Activated CD4-positive, alpha-beta memory T cell treated with anti-CD3 and anti-CD28 coated beads for 36 hours (primary cell): ENCODE measurements at regions of chr20 and their contacts with region 1.

Region 1: GRCh38 chr20:51531141-51531710 is 11.3 kb downstream of the NFATC2 start:
- DNase-seq: peak; percentile 91
- H3K4me3 Mint-ChIP-seq: peak overlapping the region; percentile 84
- H3K27ac Mint-ChIP-seq: peak overlapping the region; percentile 94
- H3K4me1 Mint-ChIP-seq: peaks cover 94% of the 10 kb centered on the region
- H3K27me3 Mint-ChIP-seq: no peaks in the 10 kb centered on the region

Region 2: GRCh38 chr20:51404298-51405060 is 126.7 kb before region 1 on chr20:
- CTCF ChIA-PET with region 1: interaction called, 6 read pairs
- POLR2A ChIA-PET with region 1: interaction called, 27 read pairs
- intact Hi-C with region 1: loop called (anchors 1 kb)
- DNase-seq: peak; percentile 97
- H3K4me3 Mint-ChIP-seq: peak overlapping the region; percentile 17
- H3K27ac Mint-ChIP-seq: peak overlapping the region; percentile 99
- H3K4me1 Mint-ChIP-seq: peaks cover 93% of the 10 kb centered on the region
- H3K27me3 Mint-ChIP-seq: no peaks in the 10 kb centered on the region

Region 3: GRCh38 chr20:51469578-51470498 is 61.4 kb before region 1 on chr20:
- CTCF ChIA-PET with region 1: no interaction called
- POLR2A ChIA-PET with region 1: interaction called, 7 read pairs
- intact Hi-C with region 1: loop called (anchors 2 kb)
- DNase-seq: no peak
- H3K4me3 Mint-ChIP-seq: no peak overlapping the region
- H3K27ac Mint-ChIP-seq: peak overlapping the region; percentile 89
- H3K4me1 Mint-ChIP-seq: peaks cover 53% of the 10 kb centered on the region
- H3K27me3 Mint-ChIP-seq: no peaks in the 10 kb centered on the region

Region 4: DNA sequence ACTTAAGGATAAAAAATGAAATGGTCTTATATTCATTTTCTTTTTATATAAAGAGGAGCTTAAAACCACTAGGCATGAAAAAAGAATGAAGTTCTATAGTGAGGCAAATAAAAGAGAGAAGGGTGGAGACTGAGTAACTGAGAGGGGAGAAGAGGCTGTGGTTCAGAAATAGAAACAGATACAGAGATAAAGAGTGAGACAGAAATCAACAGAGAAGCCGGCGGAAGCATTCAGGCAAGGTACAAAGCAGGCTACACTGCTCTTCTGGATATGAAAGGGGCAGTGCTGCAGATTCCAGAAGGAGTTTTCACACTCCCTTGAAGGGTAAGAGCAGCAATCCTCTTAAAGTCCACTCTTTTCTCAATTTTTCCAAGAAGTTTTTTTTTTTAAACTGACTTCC is 18.6 kb before region 1 on chr20:
- CTCF ChIA-PET with region 1: interaction called, 5 read pairs
- POLR2A ChIA-PET with region 1: interaction called, 8 read pairs
- intact Hi-C with region 1: loop called (anchors 1 kb)
- DNase-seq: peak; percentile 47
- H3K4me3 Mint-ChIP-seq: no peak overlapping the region
- H3K27ac Mint-ChIP-seq: peak overlapping the region; percentile 44
- H3K4me1 Mint-ChIP-seq: peaks cover 79% of the 10 kb centered on the region
- H3K27me3 Mint-ChIP-seq: no peaks in the 10 kb centered on the region

Region 5: DNA sequence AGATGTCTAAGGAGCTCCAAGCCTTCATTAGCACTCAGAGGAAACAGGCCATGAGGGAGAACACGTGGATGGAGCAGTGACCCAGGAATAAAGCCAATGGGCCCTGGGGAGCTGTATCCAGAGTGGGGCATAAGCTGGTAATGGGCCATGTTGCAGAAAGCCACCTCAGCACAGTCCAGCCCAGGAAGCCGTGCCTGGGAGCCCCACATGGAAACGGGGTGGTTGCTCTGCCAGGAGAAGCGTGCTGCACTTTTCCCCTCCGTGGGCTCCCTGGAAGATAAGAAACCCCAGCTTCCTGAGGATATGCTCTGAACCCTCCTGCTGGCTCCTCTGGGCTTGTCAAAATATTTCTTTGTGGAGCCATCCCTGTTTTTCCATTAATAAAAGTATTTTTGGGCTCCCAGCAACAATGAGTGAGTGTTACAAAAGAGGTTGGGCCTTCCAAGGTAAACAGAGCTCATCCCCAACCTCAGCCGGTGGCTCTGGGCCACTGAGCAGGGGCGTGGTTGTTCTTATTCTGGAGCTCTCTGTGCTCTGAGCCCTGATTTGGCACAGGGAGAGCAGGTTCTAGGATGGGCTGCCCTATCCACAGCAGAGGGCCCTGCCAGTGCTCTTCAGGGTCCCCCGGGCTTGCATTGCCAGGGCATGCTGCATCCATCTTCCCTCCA is 42.5 kb after region 1 on chr20:
- CTCF ChIA-PET with region 1: no interaction called
- POLR2A ChIA-PET with region 1: no interaction called
- intact Hi-C with region 1: loop called (anchors 1 kb)
- DNase-seq: no peak
- H3K4me3 Mint-ChIP-seq: no peak overlapping the region
- H3K27ac Mint-ChIP-seq: peak overlapping the region; percentile 40
- H3K4me1 Mint-ChIP-seq: peaks cover 20% of the 10 kb centered on the region
- H3K27me3 Mint-ChIP-seq: peaks cover 8% of the 10 kb centered on the region

Region 6: GRCh38 chr20:51631011-51631950 is 100.1 kb after region 1 on chr20:
- CTCF ChIA-PET with region 1: no interaction called
- POLR2A ChIA-PET with region 1: no interaction called
- intact Hi-C with region 1: loop called (anchors 2 kb)
- DNase-seq: peak; percentile 68
- H3K4me3 Mint-ChIP-seq: peak overlapping the region; percentile 38
- H3K27ac Mint-ChIP-seq: peak overlapping the region; percentile 82
- H3K4me1 Mint-ChIP-seq: peaks cover 79% of the 10 kb centered on the region
- H3K27me3 Mint-ChIP-seq: peaks cover 21% of the 10 kb centered on the region